ENCODE measurements at regions of chr6 and their contacts with region 1.

Region 1: DNA sequence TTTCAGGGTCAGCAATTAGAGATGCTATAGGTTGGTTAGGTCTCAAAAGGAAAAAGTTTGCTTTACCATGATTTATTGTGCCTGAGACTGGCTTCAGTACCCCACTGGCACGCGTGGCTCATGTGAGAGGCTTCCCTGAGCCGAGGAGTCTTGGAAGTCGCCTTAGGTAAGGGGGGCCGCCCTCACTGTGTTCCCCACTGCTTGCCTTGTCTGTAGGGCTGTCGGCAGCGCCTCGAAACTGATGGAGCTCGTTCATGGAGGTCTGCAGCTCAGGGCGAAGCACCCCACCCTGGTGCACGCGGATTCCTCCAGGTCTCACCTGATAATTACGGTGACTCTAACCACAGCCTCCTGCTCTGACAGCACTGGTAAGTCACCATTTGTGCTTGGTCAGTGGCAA is 39.2 kb downstream of the FRMD1 start:
- DNase-seq: peak; percentile 53

Region 2: DNA sequence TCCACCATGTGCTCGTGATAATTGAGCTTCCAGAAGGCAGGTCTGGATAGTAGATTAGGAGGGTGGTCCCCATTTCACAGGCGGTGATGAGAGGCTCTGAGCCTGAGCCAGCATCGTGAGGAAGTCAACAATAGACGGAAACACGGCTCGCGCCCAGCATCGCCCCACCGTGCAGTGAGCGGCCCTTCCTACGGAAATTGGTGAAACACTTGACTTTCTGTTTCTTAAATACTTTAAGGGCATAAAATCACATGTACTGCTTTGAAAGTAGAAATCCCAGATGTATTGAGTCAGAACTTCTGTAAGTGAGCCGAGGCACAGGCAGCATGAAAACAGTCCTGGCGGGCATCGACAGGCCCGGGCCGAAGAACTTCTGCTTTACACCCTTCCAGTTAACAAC is 46.7 kb before region 1 on chr6:
- intact Hi-C with region 1: no loop called
- DNase-seq: peak; percentile 75

Region 3: GRCh38 chr6:168117942-168118341 is 78.1 kb after region 1 on chr6:
- intact Hi-C with region 1: no loop called
- DNase-seq: no peak

Region 4: DNA sequence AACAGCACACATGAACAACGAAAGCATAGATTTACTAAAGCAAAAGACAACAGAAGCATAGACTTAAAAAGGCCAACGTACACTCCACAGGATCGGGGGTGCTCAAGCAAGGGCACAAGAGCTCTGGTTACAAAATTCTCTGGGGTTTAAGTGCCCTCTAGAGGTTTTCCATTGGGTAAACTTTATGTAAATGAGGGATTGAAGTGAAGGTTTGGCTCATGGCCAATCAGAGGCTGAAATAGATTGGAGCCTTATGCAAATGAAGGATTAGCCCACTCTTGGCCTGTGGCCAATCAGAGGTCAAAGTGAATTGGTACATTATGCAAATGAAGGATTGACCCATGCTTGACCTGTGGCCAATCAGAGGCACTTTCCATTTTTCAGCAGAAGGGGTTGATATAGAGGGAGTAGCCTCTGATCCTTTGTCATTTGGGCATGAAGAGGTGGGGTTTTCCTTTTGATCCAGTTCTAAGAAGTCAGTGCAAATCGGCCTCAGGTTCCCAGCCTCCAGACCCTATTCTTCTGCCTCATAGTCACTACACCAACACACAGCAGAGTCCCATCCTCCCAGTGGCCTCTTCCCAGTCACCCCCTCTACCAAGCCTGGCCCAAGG is 968.9 kb after region 1 on chr6:
- intact Hi-C with region 1: loop called in 1 of 2 experiments (anchors 5 kb)
- DNase-seq: no peak

Region 5: DNA sequence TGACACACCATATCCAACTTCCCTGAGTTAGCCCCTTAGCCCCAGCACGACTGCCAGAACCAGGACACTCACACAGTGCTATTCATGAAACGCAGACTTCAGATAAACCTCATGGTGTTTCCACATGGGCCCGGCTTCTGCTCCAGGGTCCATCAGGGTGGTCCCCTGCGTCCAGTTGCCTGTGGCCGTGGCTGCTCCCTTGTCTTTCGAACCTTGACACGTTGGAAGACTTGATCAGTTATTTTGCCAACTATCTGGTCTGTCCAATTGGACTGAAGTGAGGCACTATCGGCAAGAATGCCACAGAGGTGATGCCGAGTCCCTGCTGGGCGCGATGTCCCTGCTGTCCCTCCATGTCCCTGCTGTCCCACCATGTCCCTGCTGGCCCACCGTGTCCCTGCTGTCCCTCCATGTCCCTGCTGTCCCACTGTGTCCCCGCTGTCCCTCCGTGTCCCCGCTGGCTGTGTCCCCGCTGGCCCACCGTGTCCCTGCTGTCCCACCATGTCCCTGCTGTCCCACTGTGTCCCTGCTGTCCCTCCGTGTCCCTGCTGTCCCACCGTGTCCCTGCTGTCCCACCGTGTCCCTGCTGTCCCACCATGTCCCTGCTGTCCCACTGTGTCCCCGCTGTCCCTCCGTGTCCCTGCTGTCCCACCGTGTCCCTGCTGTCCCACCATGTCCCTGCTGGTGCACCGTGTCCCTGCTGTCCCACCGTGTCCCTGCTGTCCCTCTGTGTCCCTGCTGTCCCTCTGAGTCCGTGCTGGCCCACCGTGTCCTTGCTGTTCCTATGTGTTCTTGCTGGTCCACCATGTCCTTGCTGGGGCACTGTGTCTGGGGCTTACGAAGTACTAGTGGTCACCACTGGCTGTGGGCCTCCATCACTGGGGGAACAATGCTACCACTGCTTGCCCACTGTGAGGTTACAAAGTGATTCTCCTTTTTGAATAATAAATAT is 1999.6 kb after region 1 on chr6:
- intact Hi-C with region 1: loop called in 1 of 2 experiments (anchors 5 kb)
- DNase-seq: peak; percentile 57